MCF 10A (cell line): ENCODE measurements at regions of chr20 and their contacts with region 1.

Region 1: GRCh38 chr20:53939572-53940359 is 130.6 kb downstream of the BCAS1 start:
- DNase-seq: peak; percentile 95
- H3K4me3 Mint-ChIP-seq: no peak overlapping the region
- H3K27ac Mint-ChIP-seq: peak overlapping the region; percentile 18
- H3K4me1 Mint-ChIP-seq: peaks cover 19% of the 10 kb centered on the region
- H3K27me3 Mint-ChIP-seq: no peaks in the 10 kb centered on the region
- CTCF ChIP-seq: peak; percentile 73

Region 2: DNA sequence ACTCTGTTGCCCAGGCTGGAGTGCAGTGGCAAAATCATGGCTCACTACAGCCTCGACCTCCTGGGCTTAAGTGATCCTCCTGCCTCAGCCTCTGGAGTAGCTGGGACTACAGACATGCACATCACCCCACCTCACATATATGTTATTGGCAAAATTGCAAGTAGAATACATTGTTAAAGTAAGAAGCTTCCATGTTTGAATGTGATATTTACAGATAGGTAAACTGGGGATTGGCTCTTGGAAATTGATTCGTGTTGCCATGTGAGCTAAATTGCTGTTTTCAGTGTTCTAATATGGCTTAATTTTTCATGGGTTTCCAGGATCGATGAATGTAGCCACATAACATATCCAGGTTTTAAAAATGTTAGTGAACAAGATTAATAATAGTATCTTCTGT is 197.1 kb before region 1 on chr20:
- CTCF ChIA-PET with region 1: no interaction called
- POLR2A ChIA-PET with region 1: no interaction called
- intact Hi-C with region 1: no loop called
- DNase-seq: no peak
- H3K4me3 Mint-ChIP-seq: no peak overlapping the region
- H3K27ac Mint-ChIP-seq: no peak overlapping the region
- H3K4me1 Mint-ChIP-seq: no peaks in the 10 kb centered on the region
- H3K27me3 Mint-ChIP-seq: no peaks in the 10 kb centered on the region
- CTCF ChIP-seq: no peak

Region 3: DNA sequence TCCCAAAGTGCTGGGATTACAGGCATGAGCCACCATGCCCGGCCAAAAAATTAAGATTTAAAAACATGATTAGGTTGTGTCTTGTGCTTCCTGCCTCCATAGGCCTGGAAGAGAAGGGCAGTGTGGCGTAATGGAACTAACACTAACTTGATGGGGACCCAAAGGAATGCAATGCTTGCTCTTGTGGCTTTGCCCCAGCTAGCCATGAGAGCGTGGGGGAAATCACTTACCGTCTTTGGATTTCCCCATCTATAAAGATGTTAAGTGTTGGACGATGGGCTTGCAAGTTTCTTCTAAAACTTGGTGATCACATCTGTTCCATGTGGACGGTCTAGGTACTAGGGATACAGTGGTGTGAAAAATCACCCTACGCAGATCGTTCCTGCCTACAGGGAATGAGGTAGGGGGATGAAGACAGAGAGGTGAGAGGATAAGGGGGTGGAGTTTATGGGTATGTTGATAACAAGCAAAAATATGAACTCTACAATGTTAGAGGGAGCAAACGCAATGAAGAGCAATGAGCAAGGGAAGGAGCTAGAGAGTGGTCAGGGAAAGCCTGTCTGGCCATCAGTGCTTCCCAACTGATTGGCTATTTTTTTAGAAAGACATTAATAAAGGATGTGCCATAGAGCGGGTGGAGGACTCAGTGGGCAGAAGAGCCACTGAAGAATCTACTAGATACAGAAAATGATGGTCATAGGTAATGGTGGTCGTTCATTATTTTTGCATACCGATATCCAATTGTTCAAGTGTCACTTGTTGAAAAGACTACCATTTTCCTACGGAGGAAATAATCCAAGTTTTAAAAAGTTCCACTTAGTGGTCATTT is 34.5 kb before region 1 on chr20:
- CTCF ChIA-PET with region 1: interaction called, 5 read pairs
- POLR2A ChIA-PET with region 1: interaction called, 16 read pairs
- intact Hi-C with region 1: no loop called
- DNase-seq: no peak
- H3K4me3 Mint-ChIP-seq: no peak overlapping the region
- H3K27ac Mint-ChIP-seq: peak overlapping the region; percentile 93
- H3K4me1 Mint-ChIP-seq: peaks cover 52% of the 10 kb centered on the region
- H3K27me3 Mint-ChIP-seq: no peaks in the 10 kb centered on the region
- CTCF ChIP-seq: no peak

Region 4: GRCh38 chr20:53926428-53927028 is 13.2 kb before region 1 on chr20:
- CTCF ChIA-PET with region 1: interaction called, 81 read pairs
- POLR2A ChIA-PET with region 1: interaction called, 13 read pairs
- intact Hi-C with region 1: no loop called
- DNase-seq: peak; percentile 97
- H3K4me3 Mint-ChIP-seq: peak overlapping the region; percentile 8
- H3K27ac Mint-ChIP-seq: peak overlapping the region; percentile 92
- H3K4me1 Mint-ChIP-seq: peaks cover 24% of the 10 kb centered on the region
- H3K27me3 Mint-ChIP-seq: no peaks in the 10 kb centered on the region
- CTCF ChIP-seq: no peak

Region 5: GRCh38 chr20:53957451-53958172 is 17.8 kb after region 1 on chr20:
- CTCF ChIA-PET with region 1: interaction called, 17 read pairs
- POLR2A ChIA-PET with region 1: interaction called, 4 read pairs
- intact Hi-C with region 1: no loop called
- DNase-seq: no peak
- H3K4me3 Mint-ChIP-seq: no peak overlapping the region
- H3K27ac Mint-ChIP-seq: no peak overlapping the region
- H3K4me1 Mint-ChIP-seq: peaks cover 3% of the 10 kb centered on the region
- H3K27me3 Mint-ChIP-seq: no peaks in the 10 kb centered on the region
- CTCF ChIP-seq: no peak